Left ventricle myocardium inferior (tissue), 1 donor: ENCODE measurements at regions of chr16 and their contacts with region 1.

Region 1: GRCh38 chr16:53054670-53055485 is at the start of gene CHD9:
- DNase-seq: peak; percentile 85
- H3K4me3 ChIP-seq: peak within 1 kb of the TSS; percentile 75
- H3K27ac ChIP-seq: peak within 1 kb of the TSS; percentile 94
- H3K4me1 ChIP-seq: peaks cover 64% of the 10 kb centered on the region
- H3K27me3 ChIP-seq: no peaks in the 10 kb centered on the region
- CTCF ChIP-seq: peak; percentile 100
- total RNA-seq, gene CHD9: 38.9 TPM

Region 2: DNA sequence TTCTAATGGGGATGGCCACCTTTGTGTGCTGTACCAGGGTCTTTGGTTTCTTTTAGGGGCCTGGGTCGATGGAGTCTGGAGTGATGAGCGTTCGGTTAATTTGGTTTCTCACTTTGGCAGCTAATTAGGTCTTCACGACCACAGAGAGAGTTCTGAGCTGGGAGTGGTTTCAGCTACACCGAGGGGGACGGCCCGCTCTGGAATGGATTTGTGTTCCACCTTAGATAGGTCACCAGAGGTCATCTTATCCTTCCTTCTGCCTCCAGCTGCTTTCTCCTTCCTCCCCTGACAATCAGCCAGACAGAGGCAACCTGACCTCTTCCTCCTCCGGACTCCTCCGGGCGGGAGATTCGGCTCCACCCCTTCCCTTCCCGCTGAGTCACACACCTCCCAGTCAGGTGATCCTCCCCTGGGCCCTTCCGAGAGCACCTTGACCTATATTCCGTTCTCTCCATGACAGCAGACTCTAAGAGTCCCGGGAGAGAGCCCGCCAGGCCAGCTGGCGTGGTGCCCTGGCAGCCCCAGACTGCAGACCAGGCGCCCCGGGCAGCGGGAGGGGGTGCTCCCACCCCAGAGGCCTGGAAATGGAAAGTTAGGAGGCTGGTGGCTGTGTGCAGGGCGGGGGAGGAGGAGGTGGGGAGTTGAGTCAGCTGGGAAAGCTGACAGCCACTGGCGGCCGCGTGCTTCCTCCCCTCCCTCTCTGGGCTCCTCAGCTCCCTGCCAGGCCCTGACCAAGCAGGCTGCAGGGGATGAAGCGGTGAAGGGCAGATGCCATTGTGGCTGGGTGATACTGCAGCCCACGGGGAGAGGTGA is 44.6 kb after region 1 on chr16:
- intact Hi-C with region 1: loop called (anchors 5 kb)
- DNase-seq: peak; percentile 93
- H3K4me3 ChIP-seq: peak overlapping the region; percentile 58
- H3K27ac ChIP-seq: peak overlapping the region; percentile 97
- H3K4me1 ChIP-seq: peaks cover 83% of the 10 kb centered on the region
- H3K27me3 ChIP-seq: no peaks in the 10 kb centered on the region
- CTCF ChIP-seq: no peak

Region 3: GRCh38 chr16:53159781-53160436 is 105.0 kb after region 1 on chr16:
- intact Hi-C with region 1: loop called (anchors 10 kb)
- DNase-seq: no peak
- H3K4me3 ChIP-seq: no peak overlapping the region
- H3K27ac ChIP-seq: peak overlapping the region; percentile 17
- H3K4me1 ChIP-seq: peaks cover 15% of the 10 kb centered on the region
- H3K27me3 ChIP-seq: no peaks in the 10 kb centered on the region
- CTCF ChIP-seq: peak; percentile 80

Region 4: GRCh38 chr16:53207810-53208752 is 153.2 kb after region 1 on chr16:
- intact Hi-C with region 1: loop called (anchors 5 kb)
- DNase-seq: no peak
- H3K4me3 ChIP-seq: peak overlapping the region; percentile 66
- H3K27ac ChIP-seq: peak overlapping the region; percentile 91
- H3K4me1 ChIP-seq: peaks cover 61% of the 10 kb centered on the region
- H3K27me3 ChIP-seq: no peaks in the 10 kb centered on the region
- CTCF ChIP-seq: peak; percentile 69